ENCODE measurements at regions of chr2 and their contacts with region 1.

Region 1: DNA sequence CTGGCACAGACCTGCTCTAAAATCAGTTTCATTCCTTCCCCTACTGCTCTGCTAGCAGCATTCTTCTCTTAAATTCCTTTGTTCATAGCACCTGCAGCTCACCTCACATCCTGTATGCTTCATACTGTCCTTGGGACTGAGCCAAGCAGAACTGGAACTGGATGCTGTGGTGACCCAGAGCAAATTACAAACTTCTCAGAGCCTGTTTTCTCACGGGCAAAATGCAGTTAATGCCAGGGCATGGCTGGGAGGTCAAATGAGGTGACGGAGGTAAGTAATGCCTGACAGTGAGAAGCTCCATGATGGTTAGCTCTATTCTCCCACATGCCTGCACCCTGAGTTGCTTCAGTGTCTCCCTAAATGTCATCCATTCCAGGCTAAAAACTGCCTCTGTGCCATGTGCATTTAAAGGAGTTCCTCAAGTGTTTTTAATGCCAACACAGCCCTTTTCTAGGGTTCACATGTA is 29.7 kb downstream of the C2orf42 start:
- DNase-seq: no peak
- ATAC-seq: no peak
- H3K4me3 ChIP-seq: no peak overlapping the region
- H3K4me3 Mint-ChIP-seq: no peak overlapping the region
- H3K27ac ChIP-seq: no peak overlapping the region
- H3K27ac Mint-ChIP-seq: peak overlapping the region; percentile 2
- H3K4me1 ChIP-seq: no peaks in the 10 kb centered on the region
- H3K4me1 Mint-ChIP-seq: no peaks in the 10 kb centered on the region
- H3K27me3 ChIP-seq: no peaks in the 10 kb centered on the region
- H3K27me3 Mint-ChIP-seq: no peaks in the 10 kb centered on the region
- CTCF ChIP-seq: no peak

Region 2: GRCh38 chr2:69863298-69863697 is 297.8 kb before region 1 on chr2:
- CTCF ChIA-PET with region 1: no interaction called
- POLR2A ChIA-PET with region 1: no interaction called
- intact Hi-C with region 1: no loop called
- DNase-seq: no peak
- ATAC-seq: no peak
- H3K4me3 ChIP-seq: no peak overlapping the region
- H3K4me3 Mint-ChIP-seq: no peak overlapping the region
- H3K27ac ChIP-seq: no peak overlapping the region
- H3K27ac Mint-ChIP-seq: no peak overlapping the region
- H3K4me1 ChIP-seq: no peaks in the 10 kb centered on the region
- H3K4me1 Mint-ChIP-seq: no peaks in the 10 kb centered on the region
- H3K27me3 ChIP-seq: no peaks in the 10 kb centered on the region
- H3K27me3 Mint-ChIP-seq: no peaks in the 10 kb centered on the region
- CTCF ChIP-seq: no peak

Region 3: DNA sequence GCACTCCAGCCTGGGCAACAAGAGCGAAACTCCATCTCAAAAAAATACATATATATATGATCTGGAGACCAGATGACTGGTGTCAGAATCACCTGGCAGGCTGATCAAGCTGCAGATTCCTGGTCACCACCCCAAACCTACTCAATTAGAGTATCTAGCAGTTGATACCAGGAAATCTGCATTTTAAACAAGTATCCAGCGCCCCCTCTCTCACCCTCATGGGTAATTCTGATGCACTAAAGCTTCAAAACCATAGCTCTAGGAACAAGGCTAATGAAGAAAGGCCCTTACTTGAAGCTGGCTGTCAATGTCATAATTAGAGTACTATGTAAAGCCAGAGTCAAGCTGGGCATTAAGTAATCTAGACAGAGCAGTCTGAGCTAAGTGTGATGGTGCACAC is 98.8 kb before region 1 on chr2:
- CTCF ChIA-PET with region 1: no interaction called
- POLR2A ChIA-PET with region 1: interaction called, 10 read pairs
- intact Hi-C with region 1: no loop called
- DNase-seq: no peak
- ATAC-seq: no peak
- H3K4me3 ChIP-seq: no peak overlapping the region
- H3K4me3 Mint-ChIP-seq: no peak overlapping the region
- H3K27ac ChIP-seq: no peak overlapping the region
- H3K27ac Mint-ChIP-seq: no peak overlapping the region
- H3K4me1 ChIP-seq: no peaks in the 10 kb centered on the region
- H3K4me1 Mint-ChIP-seq: peaks cover 3% of the 10 kb centered on the region
- H3K27me3 ChIP-seq: no peaks in the 10 kb centered on the region
- H3K27me3 Mint-ChIP-seq: no peaks in the 10 kb centered on the region
- CTCF ChIP-seq: no peak

Region 4: DNA sequence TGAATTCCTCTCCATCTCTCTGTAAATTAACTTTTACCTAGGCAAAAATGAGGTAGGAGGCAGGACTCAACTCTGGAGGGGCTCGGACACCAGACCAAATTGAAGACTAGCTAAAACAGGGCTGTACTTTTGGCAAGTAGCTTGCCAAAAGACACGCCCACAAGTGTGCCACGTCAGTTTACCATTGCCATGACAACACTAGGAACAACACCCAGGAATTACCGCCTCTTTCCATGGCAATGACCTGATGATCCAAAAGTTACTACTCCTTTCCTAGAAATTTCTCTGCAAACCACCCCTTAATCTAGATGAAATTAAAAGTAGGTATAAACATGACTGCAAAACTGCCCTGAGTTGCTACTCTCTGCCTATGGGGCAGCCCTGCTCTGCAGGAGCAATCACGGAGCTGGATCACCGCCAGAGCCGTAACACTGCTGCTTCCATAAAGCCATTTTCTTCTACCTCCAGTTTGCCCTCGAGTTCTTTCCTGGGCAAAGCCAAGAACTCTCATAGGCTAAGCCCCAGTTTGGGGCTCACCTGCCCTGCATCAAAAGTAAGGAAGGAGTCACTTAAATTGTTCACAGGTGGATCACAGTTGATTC is 206.7 kb after region 1 on chr2:
- CTCF ChIA-PET with region 1: no interaction called
- POLR2A ChIA-PET with region 1: no interaction called
- intact Hi-C with region 1: no loop called
- DNase-seq: no peak
- ATAC-seq: no peak
- H3K4me3 ChIP-seq: no peak overlapping the region
- H3K4me3 Mint-ChIP-seq: no peak overlapping the region
- H3K27ac ChIP-seq: no peak overlapping the region
- H3K27ac Mint-ChIP-seq: no peak overlapping the region
- H3K4me1 ChIP-seq: no peaks in the 10 kb centered on the region
- H3K4me1 Mint-ChIP-seq: no peaks in the 10 kb centered on the region
- H3K27me3 ChIP-seq: no peaks in the 10 kb centered on the region
- H3K27me3 Mint-ChIP-seq: peaks cover 12% of the 10 kb centered on the region
- CTCF ChIP-seq: no peak